ENCODE measurements at regions of chr11 and their contacts with region 1.

Region 1: GRCh38 chr11:75603791-75604736 is 42.0 kb downstream of the SERPINH1 start:
- DNase-seq: no peak
- H3K4me3 ChIP-seq: no peak overlapping the region
- H3K27ac ChIP-seq: no peak overlapping the region
- H3K27me3 ChIP-seq: no peaks in the 10 kb centered on the region
- CTCF ChIP-seq: no peak

Region 2: DNA sequence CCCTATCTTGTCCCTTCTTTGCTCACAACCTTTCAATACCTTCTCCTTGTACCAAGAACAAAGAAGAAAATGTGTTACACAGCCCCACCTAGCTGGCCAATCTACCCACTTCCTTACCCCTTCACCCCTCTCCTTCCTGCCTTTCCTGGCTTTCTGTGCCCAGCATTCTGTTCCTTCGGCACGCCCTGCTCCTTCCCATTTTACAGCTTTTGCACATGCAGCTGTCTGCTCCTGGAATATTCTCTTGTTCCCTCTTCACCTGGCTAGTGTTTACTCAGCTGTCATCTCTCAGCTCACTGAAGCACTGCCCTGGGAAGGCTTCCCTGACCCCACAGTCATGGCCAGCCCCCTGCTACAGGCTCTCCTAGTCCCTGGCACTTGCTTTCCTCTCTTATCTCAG is 11.3 kb before region 1 on chr11:
- intact Hi-C with region 1: no loop called
- DNase-seq: no peak
- H3K4me3 ChIP-seq: no peak overlapping the region
- H3K27ac ChIP-seq: no peak overlapping the region
- H3K27me3 ChIP-seq: no peaks in the 10 kb centered on the region
- CTCF ChIP-seq: no peak

Region 3: GRCh38 chr11:75639762-75640181 is 35.7 kb after region 1 on chr11:
- intact Hi-C with region 1: loop called in 1 of 2 experiments (anchors 5 kb)
- DNase-seq: peak; percentile 68 to 96 (median 90)
- H3K4me3 ChIP-seq: peak overlapping the region in 27 of 59 donors; percentile 7 to 39 (median 24)
- H3K27ac ChIP-seq: peak overlapping the region in 11 of 59 donors; percentile 5 to 59 (median 39)
- H3K27me3 ChIP-seq: no peaks in the 10 kb centered on the region
- CTCF ChIP-seq: peak in 5 of 56 donors; percentile 4 to 20 (median 9)

Region 4: GRCh38 chr11:75896843-75897419 is 292.9 kb after region 1 on chr11:
- intact Hi-C with region 1: no loop called
- DNase-seq: no peak
- H3K4me3 ChIP-seq: no peak overlapping the region
- H3K27ac ChIP-seq: peak overlapping the region in 26 of 59 donors; percentile 1 to 73 (median 43)
- H3K27me3 ChIP-seq: no peaks in the 10 kb centered on the region
- CTCF ChIP-seq: peak; percentile 66 to 96 (median 85)

Measured in dorsolateral prefrontal cortex (tissue), 120 donors.